Heart right ventricle (tissue), 16 donors: ENCODE measurements at regions of chr2 and their contacts with region 1.

Region 1: DNA sequence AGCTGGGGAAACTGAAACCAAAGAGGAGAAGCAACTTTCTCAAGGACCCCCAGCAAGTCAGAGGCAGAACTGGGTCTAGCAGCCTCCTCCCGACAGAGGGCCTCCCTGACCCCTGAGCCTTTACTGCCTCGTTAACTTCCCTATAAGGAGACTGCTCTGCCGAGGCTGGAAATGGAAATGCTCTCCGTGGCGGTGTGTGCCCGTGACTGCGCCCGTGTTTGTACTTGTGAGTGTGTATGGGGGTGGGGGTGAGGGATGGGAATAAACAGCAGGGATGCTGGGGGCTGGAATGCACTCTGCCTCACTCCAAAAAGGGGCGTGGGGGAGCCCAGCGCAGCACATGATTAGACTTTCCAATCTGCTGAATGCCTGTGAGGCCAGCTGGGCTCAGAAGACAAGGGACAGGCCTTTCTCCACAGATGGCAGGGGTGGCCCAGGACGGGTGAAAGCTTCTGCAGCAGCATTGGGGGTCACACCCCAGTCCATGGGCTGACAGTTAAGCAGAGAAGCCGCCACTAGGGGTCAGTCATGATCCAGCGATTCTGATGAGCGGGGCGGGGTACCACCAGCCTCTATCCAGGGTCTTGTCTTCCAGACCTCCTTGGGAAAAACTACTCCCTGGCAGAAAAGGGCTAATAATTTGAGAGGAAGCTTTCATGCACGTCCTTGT is 26.8 kb downstream of the MPHOSPH10 start:
- DNase-seq: peak; percentile 29 to 43
- ATAC-seq: peak; percentile 58 to 86 (median 71)
- H3K4me3 ChIP-seq: peak overlapping the region in 4 of 10 donors; percentile 5 to 26 (median 17)
- H3K27ac ChIP-seq: no peak overlapping the region
- H3K4me1 ChIP-seq: peaks cover 0 to 11% (median 5%) of the 10 kb centered on the region in 9 donors
- H3K27me3 ChIP-seq: no peaks in the 10 kb centered on the region
- CTCF ChIP-seq: peak; percentile 29 to 72 (median 63)

Region 2: DNA sequence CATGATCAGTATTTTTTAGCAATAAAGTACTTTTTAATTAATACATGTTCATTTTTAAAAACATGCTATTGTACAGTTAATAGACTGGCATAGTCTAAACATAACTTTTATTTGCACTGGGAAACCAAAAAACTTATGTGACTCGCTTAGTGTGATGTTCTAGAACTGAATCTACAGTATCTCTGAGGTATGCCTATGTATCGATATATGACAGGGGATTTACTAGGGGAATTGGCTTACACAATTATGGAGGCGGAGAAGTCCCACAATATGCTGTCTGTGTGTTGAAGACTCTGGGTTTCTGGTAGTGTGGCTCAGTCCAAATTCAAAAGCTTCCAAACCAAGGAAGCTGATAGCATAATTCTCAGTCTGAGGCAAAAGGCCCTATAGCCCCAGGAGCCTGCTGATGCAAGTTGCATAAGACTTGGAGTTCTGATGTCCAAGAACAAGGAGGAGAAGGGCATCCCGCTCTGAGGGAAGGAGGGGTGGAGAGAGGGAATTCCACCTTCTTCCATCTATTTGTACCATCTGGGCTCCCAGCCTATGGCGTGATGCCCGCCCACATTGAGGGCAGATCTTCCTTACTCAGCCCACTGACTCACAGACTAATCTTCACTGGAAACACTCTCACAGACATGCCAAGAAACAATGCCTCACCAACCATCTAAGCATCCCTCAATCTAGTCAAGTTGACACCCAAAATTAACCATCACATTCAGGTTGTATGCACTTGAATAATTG is 201.8 kb after region 1 on chr2:
- intact Hi-C with region 1: loop called in 1 of 10 experiments (anchors 10 kb)
- DNase-seq: no peak
- ATAC-seq: peak in 2 of 8 donors; percentile 18 to 53
- H3K4me3 ChIP-seq: no peak overlapping the region
- H3K27ac ChIP-seq: no peak overlapping the region
- H3K4me1 ChIP-seq: peaks cover 0 to 30% (median 6%) of the 10 kb centered on the region in 9 donors
- H3K27me3 ChIP-seq: no peaks in the 10 kb centered on the region
- CTCF ChIP-seq: no peak